Transverse colon (tissue), 4 donors: ENCODE measurements at regions of chr5 and their contacts with region 1.

Region 1: DNA sequence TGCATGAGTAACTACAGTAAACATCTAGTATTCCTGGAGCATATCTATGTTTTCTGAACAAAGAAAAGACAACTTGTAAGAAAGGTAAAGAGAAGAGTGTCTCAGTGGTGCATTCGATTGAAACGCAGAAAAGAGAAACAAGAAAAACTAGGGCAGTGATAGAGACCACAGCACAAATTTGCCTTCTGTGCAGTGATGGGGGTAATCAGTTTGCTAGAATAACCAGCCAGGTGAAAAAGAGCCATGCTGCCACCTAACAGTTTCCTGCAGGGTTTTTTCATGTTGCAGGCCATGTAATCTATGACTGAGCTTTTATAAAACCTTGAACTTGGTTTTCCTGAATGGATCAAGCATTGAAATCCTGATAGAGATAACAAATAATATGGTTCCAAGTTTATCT is 198.4 kb upstream of the MEF2C start:
- DNase-seq: no peak
- H3K4me3 ChIP-seq: no peak overlapping the region
- H3K27ac ChIP-seq: no peak overlapping the region
- H3K4me1 ChIP-seq: no peaks in the 10 kb centered on the region
- H3K27me3 ChIP-seq: no peaks in the 10 kb centered on the region
- CTCF ChIP-seq: no peak
- EP300 ChIP-seq: no peak
- POLR2A ChIP-seq: no peak

Region 2: DNA sequence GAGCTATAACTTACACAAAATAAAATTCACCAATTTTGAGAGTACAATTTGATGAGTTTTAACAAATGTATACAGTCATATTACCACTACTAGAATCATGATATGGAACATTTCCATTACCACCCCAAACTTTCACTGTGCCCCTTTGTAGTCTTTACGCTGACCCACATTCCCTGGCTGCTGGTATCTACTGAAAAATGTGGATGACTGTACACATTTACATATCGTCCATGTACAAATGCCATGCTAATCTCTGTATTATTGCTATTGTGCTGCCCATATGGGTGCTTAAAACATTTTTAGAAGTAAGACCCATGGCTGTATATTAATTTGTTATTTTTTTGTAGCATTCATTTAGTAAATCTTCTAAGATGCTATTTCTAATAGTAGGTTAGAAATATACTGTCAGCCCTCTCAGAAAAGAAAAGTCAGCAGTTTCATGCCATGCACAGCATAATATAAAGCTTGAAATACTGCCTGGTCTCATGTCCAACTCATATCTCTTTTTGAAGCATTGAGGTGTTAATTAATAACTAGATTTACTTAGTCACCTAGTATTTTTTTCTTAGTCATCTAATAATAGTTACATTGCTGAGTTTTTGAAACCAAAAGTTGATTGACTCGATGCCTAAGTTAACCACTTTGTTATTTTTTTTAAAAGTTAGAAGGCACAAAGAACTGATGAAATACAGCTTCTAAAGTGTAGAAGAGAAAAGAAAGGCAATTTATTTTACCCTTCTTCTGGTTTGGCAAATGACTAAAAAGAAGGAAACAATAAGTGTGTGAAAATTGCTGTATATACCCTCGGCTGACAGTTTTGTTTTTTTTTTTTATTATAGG is 10.0 kb before region 1 on chr5:
- in situ Hi-C with region 1: no loop called
- intact Hi-C with region 1: loop called (anchors 1 kb)
- DNase-seq: no peak
- H3K4me3 ChIP-seq: no peak overlapping the region
- H3K27ac ChIP-seq: no peak overlapping the region
- H3K4me1 ChIP-seq: no peaks in the 10 kb centered on the region
- H3K27me3 ChIP-seq: no peaks in the 10 kb centered on the region
- CTCF ChIP-seq: no peak
- EP300 ChIP-seq: no peak
- POLR2A ChIP-seq: no peak